ENCODE measurements at regions of chr14 and their contacts with region 1.

Region 1: GRCh38 chr14:50109342-50109741 is 7.0 kb downstream of the VCPKMT start:
- DNase-seq: no peak
- ATAC-seq: no peak
- H3K4me3 ChIP-seq: no peak overlapping the region
- H3K27ac ChIP-seq: no peak overlapping the region
- H3K4me1 ChIP-seq: no peaks in the 10 kb centered on the region
- H3K27me3 ChIP-seq: no peaks in the 10 kb centered on the region

Region 2: DNA sequence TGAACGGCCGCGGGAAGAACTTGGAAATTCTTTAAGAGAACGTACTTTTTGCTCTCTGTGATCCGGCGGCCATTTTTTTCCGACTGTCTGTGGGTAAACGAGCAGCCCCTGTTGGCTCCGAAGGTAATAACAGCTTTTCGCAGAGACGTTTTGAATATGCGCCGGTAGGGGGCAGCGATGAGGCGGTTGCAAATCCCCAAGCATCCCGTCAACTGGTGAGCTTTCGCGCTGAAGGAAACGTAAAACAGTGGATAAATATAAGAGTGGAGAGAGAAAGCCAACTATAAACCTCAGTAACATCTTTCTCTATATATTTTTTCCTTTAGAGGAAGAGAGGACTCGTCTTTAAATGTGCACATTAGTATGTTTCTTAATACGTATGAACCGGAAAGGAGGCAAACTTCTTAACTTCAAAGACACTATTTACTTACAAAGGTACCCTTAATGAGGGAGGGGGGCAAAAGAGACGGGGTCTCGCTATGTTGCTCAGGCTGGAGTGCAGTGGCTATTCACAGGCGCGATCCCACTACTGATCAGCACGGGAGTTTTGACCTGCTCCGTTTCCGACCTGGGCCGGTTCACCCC is 247.2 kb before region 1 on chr14:
- intact Hi-C with region 1: loop called in 3 of 4 experiments (anchors 5 to 10 kb)
- DNase-seq: peak; percentile 82 to 89 (median 85)
- ATAC-seq: peak; percentile 53 to 56
- H3K4me3 ChIP-seq: peak overlapping the region; percentile 70
- H3K27ac ChIP-seq: peak overlapping the region; percentile 100
- H3K4me1 ChIP-seq: peaks cover 2% of the 10 kb centered on the region
- H3K27me3 ChIP-seq: no peaks in the 10 kb centered on the region

Region 3: GRCh38 chr14:49867831-49868723 is 241.3 kb before region 1 on chr14:
- intact Hi-C with region 1: loop called (anchors 5 to 10 kb)
- DNase-seq: peak; percentile 97 to 99 (median 98)
- ATAC-seq: peak; percentile 97 to 98
- H3K4me3 ChIP-seq: peak overlapping the region; percentile 75
- H3K27ac ChIP-seq: peak overlapping the region; percentile 95
- H3K4me1 ChIP-seq: peaks cover 2% of the 10 kb centered on the region
- H3K27me3 ChIP-seq: no peaks in the 10 kb centered on the region

Region 4: DNA sequence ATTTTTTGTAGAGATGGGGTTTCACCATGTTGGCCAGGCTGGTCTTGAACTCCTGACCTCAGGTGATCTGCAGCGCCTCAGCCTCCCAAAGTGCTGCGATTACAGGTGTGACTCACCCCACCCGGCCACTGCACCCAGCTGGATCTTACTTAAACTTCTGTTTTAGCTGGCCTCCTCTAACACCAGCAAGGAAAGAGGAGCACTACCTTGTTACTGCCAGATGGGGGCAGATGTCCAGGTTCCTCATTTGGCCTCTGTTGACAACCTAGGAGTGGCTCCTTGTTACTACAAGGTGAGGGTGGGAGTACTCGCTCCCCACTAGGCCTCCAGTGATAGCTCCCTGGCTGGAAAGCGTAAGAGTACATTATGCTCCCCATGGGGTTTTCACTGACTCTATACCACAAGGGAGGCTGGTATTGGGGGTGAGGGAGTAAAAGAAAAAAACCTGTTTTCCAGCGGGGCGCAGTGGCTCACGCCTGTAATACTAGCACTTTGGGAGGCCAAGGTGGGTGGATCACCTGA is 229.6 kb before region 1 on chr14:
- intact Hi-C with region 1: loop called in 1 of 4 experiments (anchors 10 kb)
- DNase-seq: peak in 1 of 3 donors; percentile 34
- ATAC-seq: peak; percentile 74 to 82
- H3K4me3 ChIP-seq: no peak overlapping the region
- H3K27ac ChIP-seq: no peak overlapping the region
- H3K4me1 ChIP-seq: no peaks in the 10 kb centered on the region
- H3K27me3 ChIP-seq: no peaks in the 10 kb centered on the region

Region 5: GRCh38 chr14:49892636-49893308 is 216.6 kb before region 1 on chr14 and contains the start of gene ARF6:
- intact Hi-C with region 1: loop called in 1 of 4 experiments (anchors 10 kb)
- DNase-seq: peak; percentile 99 to 100 (median 100)
- ATAC-seq: peak; percentile 98 to 99
- H3K4me3 ChIP-seq: peak within 1 kb of the TSS; percentile 95
- H3K27ac ChIP-seq: peak within 1 kb of the TSS; percentile 98
- H3K4me1 ChIP-seq: peaks cover 2% of the 10 kb centered on the region
- H3K27me3 ChIP-seq: no peaks in the 10 kb centered on the region
- total RNA-seq, gene ARF6: 25.3 to 34.6 (median 28.2) TPM

Region 6: GRCh38 chr14:49920935-49921334 is 188.4 kb before region 1 on chr14:
- intact Hi-C with region 1: no loop called
- DNase-seq: no peak
- ATAC-seq: no peak
- H3K4me3 ChIP-seq: no peak overlapping the region
- H3K27ac ChIP-seq: no peak overlapping the region
- H3K4me1 ChIP-seq: no peaks in the 10 kb centered on the region
- H3K27me3 ChIP-seq: no peaks in the 10 kb centered on the region

Measured in right cardiac atrium (tissue), 5 donors.